Heart right ventricle (tissue), 16 donors: ENCODE measurements at regions of chr4 and their contacts with region 1.

Region 1: GRCh38 chr4:41692717-41693345 is 55.7 kb downstream of the PHOX2B start:
- DNase-seq: peak; percentile 13
- ATAC-seq: peak in 7 of 8 donors; percentile 52 to 69 (median 56)
- H3K4me3 ChIP-seq: no peak overlapping the region
- H3K27ac ChIP-seq: no peak overlapping the region
- H3K4me1 ChIP-seq: no peaks in the 10 kb centered on the region
- H3K27me3 ChIP-seq: no peaks in the 10 kb centered on the region
- CTCF ChIP-seq: peak; percentile 58 to 85 (median 78)

Region 2: GRCh38 chr4:41814565-41814964 is 121.7 kb after region 1 on chr4:
- intact Hi-C with region 1: loop called in 5 of 10 experiments (anchors 2 to 5 kb)
- DNase-seq: peak; percentile 5 to 11
- ATAC-seq: peak in 2 of 8 donors; percentile 50 to 69
- H3K4me3 ChIP-seq: no peak overlapping the region
- H3K27ac ChIP-seq: no peak overlapping the region
- H3K4me1 ChIP-seq: peaks cover 0 to 8% (median 0%) of the 10 kb centered on the region in 9 donors
- H3K27me3 ChIP-seq: peaks cover 0 to 53% (median 20%) of the 10 kb centered on the region in 7 donors
- CTCF ChIP-seq: peak in 7 of 9 donors; percentile 34 to 63 (median 56)

Region 3: DNA sequence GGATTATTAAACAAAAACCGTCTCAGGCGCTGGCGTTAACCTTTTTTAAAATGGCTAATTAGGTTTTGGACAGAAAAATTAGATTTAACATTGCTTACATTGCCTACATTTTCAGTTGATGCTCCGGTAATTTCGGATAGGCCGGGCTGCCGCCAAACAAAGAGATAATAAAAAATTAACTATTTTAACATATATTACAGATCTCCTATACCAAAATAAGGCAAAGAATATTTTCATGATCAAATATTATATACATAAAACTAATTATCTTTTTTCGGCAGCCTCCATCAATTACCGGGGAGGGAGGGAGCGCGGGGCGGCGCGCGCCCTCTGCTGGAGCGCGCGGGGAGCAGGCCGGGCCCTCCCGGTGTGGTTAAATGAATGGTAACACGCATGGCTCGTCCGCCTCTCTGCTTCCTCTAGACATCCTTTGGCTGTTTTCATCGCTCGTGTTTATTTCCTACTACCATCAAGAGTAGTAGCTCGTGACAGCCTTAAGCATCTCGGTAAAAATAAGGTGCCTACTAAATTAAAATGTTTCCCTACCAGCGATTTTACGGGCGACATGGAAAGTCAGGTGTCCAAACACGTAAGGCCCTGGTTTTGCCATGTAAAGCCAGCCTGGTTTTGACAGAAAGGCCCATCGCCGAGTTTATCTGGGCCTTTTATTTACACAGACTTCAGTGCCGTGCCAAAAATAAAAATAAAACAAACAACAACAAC is 190.0 kb after region 1 on chr4:
- intact Hi-C with region 1: loop called (anchors 1 to 5 kb)
- DNase-seq: peak; percentile 24 to 49
- ATAC-seq: peak; percentile 52 to 89 (median 82)
- H3K4me3 ChIP-seq: peak overlapping the region; percentile 16 to 48 (median 40)
- H3K27ac ChIP-seq: no peak overlapping the region
- H3K4me1 ChIP-seq: peaks cover 8 to 37% (median 28%) of the 10 kb centered on the region in 9 donors
- H3K27me3 ChIP-seq: peaks cover 8 to 98% (median 87%) of the 10 kb centered on the region in 7 donors
- CTCF ChIP-seq: peak; percentile 78 to 98 (median 96)

Region 4: GRCh38 chr4:41887821-41888686 is 195.2 kb after region 1 on chr4:
- intact Hi-C with region 1: loop called in 9 of 10 experiments (anchors 2 to 5 kb)
- DNase-seq: no peak
- ATAC-seq: no peak
- H3K4me3 ChIP-seq: no peak overlapping the region
- H3K27ac ChIP-seq: no peak overlapping the region
- H3K4me1 ChIP-seq: no peaks in the 10 kb centered on the region
- H3K27me3 ChIP-seq: peaks cover 0 to 73% (median 41%) of the 10 kb centered on the region in 7 donors
- CTCF ChIP-seq: peak; percentile 74 to 95 (median 91)